Naive thymus-derived CD4-positive, alpha-beta T cell (primary cell): ENCODE measurements at regions of chr5 and their contacts with region 1.

Region 1: GRCh38 chr5:159209438-159210305 is at the start of gene RNF145:
- DNase-seq: peak; percentile 93 to 96 (median 94)
- ATAC-seq: peak; percentile 89
- H3K4me3 ChIP-seq: peak within 1 kb of the TSS; percentile 90
- H3K4me3 Mint-ChIP-seq: peak within 1 kb of the TSS; percentile 95 to 99 (median 96)
- H3K27ac ChIP-seq: peak within 1 kb of the TSS; percentile 88
- H3K27ac Mint-ChIP-seq: peak within 1 kb of the TSS; percentile 91 to 99 (median 97)
- H3K4me1 ChIP-seq: peaks cover 17 to 31% of the 10 kb centered on the region in 2 donors
- H3K4me1 Mint-ChIP-seq: peaks cover 44 to 64% (median 54%) of the 10 kb centered on the region in 7 donors
- H3K27me3 ChIP-seq: no peaks in the 10 kb centered on the region
- H3K27me3 Mint-ChIP-seq: no peaks in the 10 kb centered on the region
- total RNA-seq, gene RNF145: 51.8 to 142 (median 70.6) TPM

Region 2: GRCh38 chr5:157265714-157266285 is 1943.9 kb before region 1 on chr5 and contains the start of gene CYFIP2:
- CTCF ChIA-PET with region 1: no interaction called
- POLR2A ChIA-PET with region 1: no interaction called
- intact Hi-C with region 1: loop called in 1 of 2 experiments (anchors 10 kb)
- DNase-seq: peak; percentile 68 to 85 (median 84)
- ATAC-seq: peak; percentile 94
- H3K4me3 ChIP-seq: peak within 1 kb of the TSS; percentile 83
- H3K4me3 Mint-ChIP-seq: peak within 1 kb of the TSS; percentile 95 to 99 (median 97)
- H3K27ac ChIP-seq: peak within 1 kb of the TSS; percentile 84
- H3K27ac Mint-ChIP-seq: peak within 1 kb of the TSS; percentile 95 to 99 (median 98)
- H3K4me1 ChIP-seq: peaks cover 41 to 57% of the 10 kb centered on the region in 2 donors
- H3K4me1 Mint-ChIP-seq: peaks cover 51 to 76% (median 72%) of the 10 kb centered on the region in 7 donors
- H3K27me3 ChIP-seq: no peaks in the 10 kb centered on the region
- H3K27me3 Mint-ChIP-seq: no peaks in the 10 kb centered on the region
- total RNA-seq, gene CYFIP2: 386 to 449 (median 401) TPM

Region 3: GRCh38 chr5:157994906-157995519 is 1214.7 kb before region 1 on chr5:
- CTCF ChIA-PET with region 1: no interaction called
- POLR2A ChIA-PET with region 1: no interaction called
- intact Hi-C with region 1: loop called in 1 of 2 experiments (anchors 1 kb)
- DNase-seq: peak; percentile 5 to 52 (median 31)
- ATAC-seq: peak; percentile 84
- H3K4me3 ChIP-seq: no peak overlapping the region
- H3K4me3 Mint-ChIP-seq: peak overlapping the region in 9 of 10 donors; percentile 29 to 77 (median 61)
- H3K27ac ChIP-seq: no peak overlapping the region
- H3K27ac Mint-ChIP-seq: no peak overlapping the region
- H3K4me1 ChIP-seq: peaks cover 14 to 16% of the 10 kb centered on the region in 2 donors
- H3K4me1 Mint-ChIP-seq: peaks cover 8 to 20% (median 12%) of the 10 kb centered on the region in 7 donors
- H3K27me3 ChIP-seq: peaks cover 0 to 3% of the 10 kb centered on the region in 2 donors
- H3K27me3 Mint-ChIP-seq: peaks cover 13 to 56% (median 20%) of the 10 kb centered on the region in 5 donors

Region 4: DNA sequence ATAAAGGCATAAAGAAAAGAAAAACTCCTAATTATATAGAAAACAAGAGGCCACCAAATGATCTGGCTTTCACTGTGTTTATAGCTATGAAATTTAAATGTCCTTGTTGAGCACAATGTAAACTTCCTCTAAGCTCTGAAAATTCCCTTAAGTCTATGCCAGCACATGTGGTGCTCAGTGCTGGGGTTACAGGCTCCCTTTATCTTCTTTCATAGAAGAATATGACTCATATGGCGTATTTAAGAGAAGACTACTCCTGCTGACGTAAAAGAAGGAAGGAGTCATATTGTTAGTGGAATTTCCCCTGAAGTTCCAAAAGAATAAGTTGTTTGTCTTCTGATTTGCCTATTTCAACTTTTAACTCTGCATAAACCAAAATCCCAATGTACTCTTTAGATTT is 30.7 kb before region 1 on chr5:
- CTCF ChIA-PET with region 1: interaction called, 3 read pairs
- POLR2A ChIA-PET with region 1: interaction called, 9 read pairs
- intact Hi-C with region 1: loop called (anchors 1 kb)
- DNase-seq: peak in 1 of 9 donors; percentile 46
- ATAC-seq: peak; percentile 84
- H3K4me3 ChIP-seq: no peak overlapping the region
- H3K4me3 Mint-ChIP-seq: peak overlapping the region in 3 of 10 donors; percentile 18 to 77 (median 53)
- H3K27ac ChIP-seq: peak overlapping the region; percentile 48
- H3K27ac Mint-ChIP-seq: peak overlapping the region in 8 of 9 donors; percentile 60 to 93 (median 90)
- H3K4me1 ChIP-seq: peaks cover 0 to 22% of the 10 kb centered on the region in 2 donors
- H3K4me1 Mint-ChIP-seq: peaks cover 22 to 93% (median 83%) of the 10 kb centered on the region in 7 donors
- H3K27me3 ChIP-seq: no peaks in the 10 kb centered on the region
- H3K27me3 Mint-ChIP-seq: no peaks in the 10 kb centered on the region

Region 5: DNA sequence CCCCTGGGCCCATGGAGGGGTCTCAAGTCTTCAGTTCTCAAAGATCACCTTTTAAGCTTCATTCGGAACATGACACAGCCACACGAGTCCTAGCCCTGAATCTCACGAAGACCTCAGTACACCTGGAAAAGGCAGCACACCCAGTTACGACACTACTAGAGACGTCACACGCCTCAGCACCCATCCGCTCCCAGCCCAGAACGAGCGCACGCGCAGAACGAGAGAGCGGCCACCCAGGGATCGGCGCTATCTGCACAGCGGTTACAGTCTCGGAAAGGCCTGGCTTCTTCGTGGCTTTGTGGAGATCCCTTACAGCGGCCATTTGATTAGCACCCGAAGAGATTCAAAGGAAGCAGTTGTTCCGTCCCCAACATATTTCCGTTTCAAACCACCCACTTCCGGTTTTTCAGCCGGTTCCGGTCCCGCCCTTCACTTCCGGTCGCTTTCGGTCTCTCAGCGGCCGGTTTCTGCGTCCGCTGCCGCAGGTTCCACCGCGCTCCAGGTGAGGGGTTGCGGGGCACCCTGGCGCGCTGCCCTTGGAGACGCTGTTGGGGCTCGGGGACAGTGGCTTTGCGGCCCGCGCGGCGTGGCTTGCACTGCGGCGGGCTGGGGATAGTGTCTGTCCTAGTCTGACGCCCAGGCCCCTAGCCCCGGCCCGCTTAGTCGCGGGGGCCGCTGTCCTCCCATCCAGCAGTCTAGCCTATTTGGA is 53.3 kb after region 1 on chr5 and contains the start of gene UBLCP1:
- CTCF ChIA-PET with region 1: interaction called, 3 read pairs
- POLR2A ChIA-PET with region 1: interaction called, 18 read pairs
- intact Hi-C with region 1: loop called (anchors 1 kb)
- DNase-seq: peak; percentile 65 to 88 (median 83)
- ATAC-seq: peak; percentile 91
- H3K4me3 ChIP-seq: peak within 1 kb of the TSS; percentile 76
- H3K4me3 Mint-ChIP-seq: peak within 1 kb of the TSS; percentile 89 to 99 (median 96)
- H3K27ac ChIP-seq: peak within 1 kb of the TSS; percentile 90
- H3K27ac Mint-ChIP-seq: peak within 1 kb of the TSS; percentile 97 to 100 (median 99)
- H3K4me1 ChIP-seq: peaks cover 8 to 17% of the 10 kb centered on the region in 2 donors
- H3K4me1 Mint-ChIP-seq: peaks cover 28 to 65% (median 52%) of the 10 kb centered on the region in 7 donors
- H3K27me3 ChIP-seq: no peaks in the 10 kb centered on the region
- H3K27me3 Mint-ChIP-seq: peaks cover 0 to 4% (median 0%) of the 10 kb centered on the region in 5 donors
- total RNA-seq, gene UBLCP1: 18.2 to 30.9 (median 30.2) TPM

Region 6: GRCh38 chr5:159412284-159413046 is 202.8 kb after region 1 on chr5:
- CTCF ChIA-PET with region 1: no interaction called
- POLR2A ChIA-PET with region 1: interaction called, 3 read pairs
- intact Hi-C with region 1: loop called (anchors 2 kb)
- DNase-seq: peak; percentile 9 to 88 (median 80)
- ATAC-seq: peak; percentile 94
- H3K4me3 ChIP-seq: no peak overlapping the region
- H3K4me3 Mint-ChIP-seq: peak overlapping the region; percentile 26 to 80 (median 73)
- H3K27ac ChIP-seq: peak overlapping the region; percentile 22
- H3K27ac Mint-ChIP-seq: peak overlapping the region; percentile 80 to 97 (median 92)
- H3K4me1 ChIP-seq: peaks cover 30 to 42% of the 10 kb centered on the region in 2 donors
- H3K4me1 Mint-ChIP-seq: peaks cover 28 to 62% (median 42%) of the 10 kb centered on the region in 7 donors
- H3K27me3 ChIP-seq: no peaks in the 10 kb centered on the region
- H3K27me3 Mint-ChIP-seq: peaks cover 0 to 19% (median 0%) of the 10 kb centered on the region in 5 donors

Region 7: GRCh38 chr5:160119142-160119904 is 909.7 kb after region 1 on chr5 and contains the start of gene PWWP2A:
- CTCF ChIA-PET with region 1: no interaction called
- POLR2A ChIA-PET with region 1: no interaction called
- intact Hi-C with region 1: loop called (anchors 1 kb)
- DNase-seq: peak; percentile 86 to 100 (median 99)
- ATAC-seq: peak; percentile 96
- H3K4me3 ChIP-seq: peak within 1 kb of the TSS; percentile 79
- H3K4me3 Mint-ChIP-seq: peak within 1 kb of the TSS; percentile 83 to 99 (median 94)
- H3K27ac ChIP-seq: peak within 1 kb of the TSS; percentile 83
- H3K27ac Mint-ChIP-seq: peak within 1 kb of the TSS; percentile 83 to 98 (median 94)
- H3K4me1 ChIP-seq: peaks cover 0 to 5% of the 10 kb centered on the region in 2 donors
- H3K4me1 Mint-ChIP-seq: peaks cover 0 to 25% (median 20%) of the 10 kb centered on the region in 7 donors
- H3K27me3 ChIP-seq: no peaks in the 10 kb centered on the region
- H3K27me3 Mint-ChIP-seq: peaks cover 0 to 8% (median 0%) of the 10 kb centered on the region in 5 donors
- total RNA-seq, gene PWWP2A: 21.2 to 43.6 (median 29.5) TPM